Lower lobe of right lung (tissue), 2 donors: ENCODE measurements at regions of chr6 and their contacts with region 1.

Region 1: DNA sequence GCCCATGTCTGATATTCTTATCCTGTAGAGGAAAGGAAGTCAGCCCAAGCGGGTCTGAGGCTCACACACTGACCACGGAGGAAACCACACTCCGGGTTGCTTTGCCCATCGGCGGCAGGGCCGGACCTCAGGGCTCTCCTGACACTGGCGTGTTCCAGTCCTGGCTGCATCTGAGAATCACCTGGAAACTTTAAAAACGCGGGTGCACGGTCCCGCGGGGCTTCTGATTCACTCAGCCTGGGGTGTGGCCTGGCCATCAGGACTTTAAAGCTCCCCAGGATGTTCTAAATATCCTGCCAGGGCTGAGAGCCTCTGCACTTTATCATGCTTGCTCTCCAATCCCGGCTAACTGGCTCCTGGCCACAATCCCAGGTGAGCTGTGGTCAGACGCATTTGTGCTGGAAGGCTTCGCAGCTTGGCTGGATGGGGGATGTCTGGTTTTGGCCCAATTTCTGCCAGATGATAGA is 47.7 kb upstream of the DACT2 start:
- DNase-seq: no peak
- ATAC-seq: no peak
- H3K4me3 ChIP-seq: no peak overlapping the region
- H3K27ac ChIP-seq: no peak overlapping the region
- H3K4me1 ChIP-seq: no peaks in the 10 kb centered on the region
- H3K27me3 ChIP-seq: peaks cover 23% of the 10 kb centered on the region
- CTCF ChIP-seq: no peak

Region 2: DNA sequence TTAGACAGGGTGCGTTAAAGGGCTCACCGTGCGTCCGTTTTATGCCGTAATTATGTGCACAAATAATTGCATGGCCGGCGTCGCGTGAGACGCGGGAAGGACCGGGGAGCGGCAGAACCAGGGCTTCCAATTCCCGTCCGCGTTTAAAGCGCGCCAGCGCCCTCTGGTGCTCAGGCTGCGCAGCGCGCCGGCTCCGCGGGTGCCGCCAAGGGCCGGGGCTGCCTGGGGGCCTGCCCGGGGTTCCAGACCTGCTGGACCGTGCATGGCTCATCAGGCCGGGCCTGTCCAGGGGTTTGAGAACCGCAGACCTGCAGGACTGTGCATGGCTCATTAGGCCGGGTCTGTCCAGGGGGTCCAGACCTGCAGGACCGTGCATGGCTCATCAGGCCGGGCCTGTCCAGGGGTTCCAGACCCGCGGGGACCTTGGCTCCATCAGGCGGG is 517.3 kb after region 1 on chr6:
- intact Hi-C with region 1: loop called (anchors 10 kb)
- DNase-seq: peak; percentile 81
- ATAC-seq: peak; percentile 93
- H3K4me3 ChIP-seq: peak overlapping the region; percentile 45
- H3K27ac ChIP-seq: no peak overlapping the region
- H3K4me1 ChIP-seq: peaks cover 10% of the 10 kb centered on the region
- H3K27me3 ChIP-seq: peaks cover 11% of the 10 kb centered on the region
- CTCF ChIP-seq: peak; percentile 98